Dendritic cell treated with granulocyte-macrophage colony-stimulating factor and Interleukin-4, amounts not matched to agents 40 ng/mL and 50 ng/mL, for 4 days (primary cell): ENCODE measurements at regions of chr7 and their contacts with region 1.

Region 1: GRCh38 chr7:26667500-26668133 is 196.8 kb downstream of the SKAP2 start:
- H3K4me3 Mint-ChIP-seq: no peak overlapping the region
- H3K27ac Mint-ChIP-seq: no peak overlapping the region
- H3K4me1 Mint-ChIP-seq: peaks cover 6% of the 10 kb centered on the region
- H3K27me3 Mint-ChIP-seq: no peaks in the 10 kb centered on the region

Region 2: GRCh38 chr7:26278770-26279169 is 388.8 kb before region 1 on chr7:
- intact Hi-C with region 1: loop called (anchors 10 kb)
- H3K4me3 Mint-ChIP-seq: no peak overlapping the region
- H3K27ac Mint-ChIP-seq: no peak overlapping the region
- H3K4me1 Mint-ChIP-seq: no peaks in the 10 kb centered on the region
- H3K27me3 Mint-ChIP-seq: peaks cover 1% of the 10 kb centered on the region

Region 3: GRCh38 chr7:26376175-26376917 is 291.3 kb before region 1 on chr7:
- intact Hi-C with region 1: loop called (anchors 2 kb)
- H3K4me3 Mint-ChIP-seq: peak overlapping the region; percentile 79
- H3K27ac Mint-ChIP-seq: peak overlapping the region; percentile 41
- H3K4me1 Mint-ChIP-seq: peaks cover 17% of the 10 kb centered on the region
- H3K27me3 Mint-ChIP-seq: peaks cover 26% of the 10 kb centered on the region

Region 4: DNA sequence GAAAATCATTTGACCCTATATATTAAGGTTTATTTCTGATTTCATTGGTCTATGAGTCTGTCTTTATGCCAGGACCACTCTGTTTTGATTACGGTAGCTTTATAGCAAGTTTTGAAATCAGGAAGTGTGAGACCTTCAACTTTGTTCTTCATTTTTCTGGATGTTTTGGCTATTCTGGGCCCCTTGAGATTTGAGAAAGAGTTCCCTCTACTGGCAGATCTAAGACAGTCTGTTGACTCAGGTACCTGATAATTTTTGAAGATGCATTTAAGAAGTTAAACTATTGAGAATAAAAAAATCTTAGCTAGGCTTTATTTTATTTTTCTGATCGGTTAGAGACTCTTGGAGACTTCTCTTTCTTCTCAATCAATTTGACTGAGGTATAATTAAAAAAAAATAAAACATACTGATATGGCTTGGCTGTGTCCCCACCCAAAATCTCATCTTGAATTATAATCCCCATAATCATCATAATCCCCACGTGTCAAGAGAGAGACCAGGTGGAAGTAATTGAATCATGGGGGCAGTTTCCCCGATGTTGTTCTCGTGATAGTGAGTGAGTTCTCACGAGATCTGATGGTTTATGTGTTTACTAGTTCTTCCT is 166.8 kb before region 1 on chr7:
- intact Hi-C with region 1: loop called (anchors 10 kb)
- H3K4me3 Mint-ChIP-seq: no peak overlapping the region
- H3K27ac Mint-ChIP-seq: no peak overlapping the region
- H3K4me1 Mint-ChIP-seq: no peaks in the 10 kb centered on the region
- H3K27me3 Mint-ChIP-seq: peaks cover 8% of the 10 kb centered on the region